ENCODE measurements at regions of chr9 and their contacts with region 1.

Region 1: GRCh38 chr9:33404788-33405362 is 2.5 kb upstream of the AQP7 start:
- DNase-seq: no peak
- ATAC-seq: peak in 6 of 8 donors; percentile 16 to 61 (median 42)
- H3K4me3 ChIP-seq: no peak overlapping the region
- H3K27ac ChIP-seq: peak overlapping the region in 8 of 10 donors; percentile 84 to 96 (median 92)
- H3K4me1 ChIP-seq: peaks cover 10 to 59% (median 39%) of the 10 kb centered on the region in 9 donors
- H3K27me3 ChIP-seq: no peaks in the 10 kb centered on the region
- CTCF ChIP-seq: no peak

Region 2: GRCh38 chr9:33393581-33393980 is 11.3 kb before region 1 on chr9:
- intact Hi-C with region 1: loop called in 1 of 10 experiments (anchors 1 kb)
- DNase-seq: peak; percentile 54 to 60
- ATAC-seq: no peak
- H3K4me3 ChIP-seq: no peak overlapping the region
- H3K27ac ChIP-seq: peak overlapping the region; percentile 27 to 94 (median 87)
- H3K4me1 ChIP-seq: peaks cover 8 to 65% (median 28%) of the 10 kb centered on the region in 9 donors
- H3K27me3 ChIP-seq: no peaks in the 10 kb centered on the region
- CTCF ChIP-seq: no peak

Region 3: DNA sequence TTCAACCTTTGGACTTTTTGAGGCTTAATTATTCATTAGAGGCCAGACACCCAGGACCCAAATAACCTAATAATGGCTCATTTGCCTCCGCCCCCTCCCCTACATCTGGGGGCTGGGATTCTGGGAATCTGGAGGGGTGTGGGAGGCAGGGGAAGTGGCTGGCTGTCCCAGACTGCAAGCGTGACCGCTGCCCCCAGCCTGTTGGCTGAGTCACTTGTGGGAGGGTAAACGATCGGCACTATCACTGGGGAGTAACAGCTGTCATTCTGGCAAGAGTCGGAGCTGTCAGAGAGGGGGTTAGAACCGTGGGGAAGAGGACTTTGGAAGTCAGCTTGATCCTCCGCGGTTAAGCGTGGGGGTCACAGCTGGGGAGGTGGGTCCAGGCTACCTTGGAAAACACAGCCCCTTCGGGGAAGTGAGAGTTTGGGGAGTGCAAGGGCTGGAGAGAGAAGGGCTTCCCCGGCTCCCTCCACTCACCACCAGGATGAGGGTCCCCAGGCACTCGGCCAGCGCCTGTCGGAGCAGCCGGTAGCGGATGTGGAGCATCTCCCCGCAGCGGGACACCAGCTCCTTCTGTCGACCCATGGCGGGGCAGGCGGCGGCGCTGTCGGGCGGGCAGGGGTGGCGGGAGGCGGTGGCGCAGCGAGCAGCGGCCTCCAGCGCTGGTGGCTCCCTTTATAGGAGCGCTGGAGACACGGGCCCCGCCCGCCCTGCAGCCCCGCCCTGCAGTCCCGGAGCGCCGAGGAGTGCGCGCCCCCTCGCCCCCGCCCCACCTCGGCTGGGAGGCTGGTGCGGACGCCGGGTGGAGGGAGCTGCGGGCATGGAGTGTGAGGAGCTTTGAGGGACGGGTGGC is 42.3 kb after region 1 on chr9 and contains the start of gene AQP3:
- intact Hi-C with region 1: loop called in 4 of 10 experiments (anchors 5 kb)
- DNase-seq: peak; percentile 61 to 74
- ATAC-seq: peak; percentile 84 to 91 (median 87)
- H3K4me3 ChIP-seq: peak within 1 kb of the TSS; percentile 27 to 65 (median 59)
- H3K27ac ChIP-seq: peak within 1 kb of the TSS in 9 of 10 donors; percentile 49 to 80 (median 61)
- H3K4me1 ChIP-seq: peaks cover 0 to 25% (median 19%) of the 10 kb centered on the region in 9 donors
- H3K27me3 ChIP-seq: peaks cover 0 to 12% (median 0%) of the 10 kb centered on the region in 7 donors
- CTCF ChIP-seq: peak in 7 of 9 donors; percentile 17 to 62 (median 44)
- total RNA-seq, gene AQP3: 1.9 to 37.2 (median 10.1) TPM

Region 4: GRCh38 chr9:33466565-33467495 is 62.0 kb after region 1 on chr9:
- intact Hi-C with region 1: loop called in 2 of 10 experiments (anchors 2 to 5 kb)
- DNase-seq: peak; percentile 45 to 71
- ATAC-seq: peak; percentile 25 to 81 (median 50)
- H3K4me3 ChIP-seq: no peak overlapping the region
- H3K27ac ChIP-seq: no peak overlapping the region
- H3K4me1 ChIP-seq: peaks cover 0 to 2% (median 0%) of the 10 kb centered on the region in 9 donors
- H3K27me3 ChIP-seq: no peaks in the 10 kb centered on the region
- CTCF ChIP-seq: peak; percentile 85 to 96 (median 93)

Measured in heart right ventricle (tissue), 16 donors.